Activated CD4-positive, alpha-beta T cell treated with anti-CD3 and anti-CD28 coated beads, Interleukin-2, amount 10 ng/mL, durations not matched to agents 7 days and 5 days (primary cell): ENCODE measurements at regions of chr6 and their contacts with region 1.

Region 1: GRCh38 chr6:37516076-37516919 is 16.6 kb upstream of the CCDC167 start:
- DNase-seq: peak; percentile 94
- H3K4me3 Mint-ChIP-seq: peak overlapping the region; percentile 83
- H3K27ac Mint-ChIP-seq: peak overlapping the region; percentile 97
- H3K4me1 Mint-ChIP-seq: peaks cover 72% of the 10 kb centered on the region
- H3K27me3 Mint-ChIP-seq: no peaks in the 10 kb centered on the region

Region 2: GRCh38 chr6:37499433-37500293 is 16.6 kb before region 1 on chr6 and contains the start of gene CCDC167:
- CTCF ChIA-PET with region 1: interaction called, 13 read pairs
- POLR2A ChIA-PET with region 1: interaction called, 3 read pairs
- DNase-seq: peak; percentile 98
- H3K4me3 Mint-ChIP-seq: peak within 1 kb of the TSS; percentile 94
- H3K27ac Mint-ChIP-seq: peak within 1 kb of the TSS; percentile 96
- H3K4me1 Mint-ChIP-seq: peaks cover 82% of the 10 kb centered on the region
- H3K27me3 Mint-ChIP-seq: no peaks in the 10 kb centered on the region
- total RNA-seq, gene CCDC167: 54.8 to 60.9 TPM